A673 (cell line): ENCODE measurements at regions of chr2 and their contacts with region 1.

Region 1: GRCh38 chr2:88729061-88729745 is 37.7 kb downstream of the RPIA start:
- DNase-seq: no peak
- H3K4me3 ChIP-seq: no peak overlapping the region
- H3K27ac ChIP-seq: no peak overlapping the region
- H3K4me1 ChIP-seq: no peaks in the 10 kb centered on the region
- H3K27me3 ChIP-seq: no peaks in the 10 kb centered on the region
- CTCF ChIP-seq: no peak

Region 2: DNA sequence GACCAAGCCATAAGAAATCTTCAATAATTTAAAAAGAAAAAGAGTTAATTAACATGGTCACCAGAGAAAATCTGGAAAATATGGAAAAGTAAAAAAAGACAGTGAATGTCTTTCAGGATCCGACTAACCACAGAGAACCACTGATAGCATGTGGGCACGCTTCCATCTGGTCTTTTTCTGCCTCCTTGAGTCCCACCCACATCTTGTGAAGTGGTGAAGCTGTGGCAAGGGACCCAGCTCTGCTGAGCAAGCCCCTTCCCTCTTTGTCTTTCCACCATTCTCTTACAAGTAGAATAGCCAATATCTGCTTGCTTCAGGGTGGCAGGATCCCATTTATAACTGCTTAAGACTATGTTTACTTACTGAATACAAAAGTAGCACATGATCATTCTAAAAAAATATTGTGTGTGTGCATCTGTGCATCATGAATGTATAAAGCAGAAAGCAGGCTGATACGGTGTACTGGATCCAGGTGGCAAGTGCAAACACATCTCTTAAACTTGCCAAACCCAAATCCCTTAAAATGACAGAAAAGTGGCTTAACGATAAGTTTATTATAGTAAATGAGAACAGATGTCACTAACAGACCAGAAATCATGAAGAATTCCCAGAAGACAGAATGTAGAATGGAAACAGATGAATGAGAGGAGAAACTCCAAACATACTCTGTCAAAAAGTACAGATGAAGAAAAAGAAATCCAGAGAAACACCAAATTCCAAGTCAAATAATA is 329.0 kb before region 1 on chr2:
- CTCF ChIA-PET with region 1: no interaction called
- POLR2A ChIA-PET with region 1: no interaction called
- intact Hi-C with region 1: no loop called
- DNase-seq: no peak
- H3K4me3 ChIP-seq: no peak overlapping the region
- H3K27ac ChIP-seq: no peak overlapping the region
- H3K4me1 ChIP-seq: no peaks in the 10 kb centered on the region
- H3K27me3 ChIP-seq: peaks cover 16% of the 10 kb centered on the region
- CTCF ChIP-seq: no peak

Region 3: DNA sequence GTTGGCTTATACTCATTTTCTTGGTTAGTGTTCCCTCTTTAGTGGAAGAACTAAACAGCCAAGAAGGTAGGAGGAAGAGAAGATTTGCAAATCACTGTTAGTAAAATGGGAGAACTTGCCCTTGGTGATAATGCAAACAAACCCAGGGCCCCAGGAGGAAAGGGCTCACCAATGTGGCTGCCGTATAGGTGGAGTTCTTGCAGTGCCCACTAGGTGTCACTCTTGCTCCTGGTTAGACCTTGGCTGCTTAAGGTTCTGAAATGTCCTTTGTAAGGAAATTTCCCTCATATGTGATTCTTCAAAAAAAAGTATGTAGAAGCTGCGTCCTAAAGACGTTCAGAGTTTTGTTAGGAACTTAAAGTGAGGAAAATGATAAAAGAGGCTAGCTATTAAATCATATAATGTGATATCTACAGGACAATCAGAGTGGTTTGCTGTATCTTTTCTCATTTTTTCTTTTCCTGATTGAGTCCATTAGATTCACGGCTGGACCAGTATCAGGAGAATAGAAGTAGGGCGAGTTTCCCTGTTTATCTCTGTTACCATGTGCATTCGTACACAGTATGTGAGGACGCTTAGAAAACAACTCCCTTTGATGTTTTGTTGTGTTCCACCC is 10.9 kb after region 1 on chr2:
- CTCF ChIA-PET with region 1: no interaction called
- POLR2A ChIA-PET with region 1: no interaction called
- intact Hi-C with region 1: loop called (anchors 2 kb)
- DNase-seq: peak; percentile 74
- H3K4me3 ChIP-seq: no peak overlapping the region
- H3K27ac ChIP-seq: no peak overlapping the region
- H3K4me1 ChIP-seq: peaks cover 6% of the 10 kb centered on the region
- H3K27me3 ChIP-seq: no peaks in the 10 kb centered on the region
- CTCF ChIP-seq: peak; percentile 92